Caco-2 (cell line): ENCODE measurements at regions of chr1 and their contacts with region 1.

Region 1: GRCh38 chr1:205485338-205486228 is 18.9 kb upstream of the CDK18 start:
- DNase-seq: peak; percentile 89 to 91
- H3K4me3 ChIP-seq: no peak overlapping the region
- H3K4me3 Mint-ChIP-seq: no peak overlapping the region
- H3K27ac Mint-ChIP-seq: no peak overlapping the region
- H3K4me1 ChIP-seq: 0 out of 2 replicates have a peak, but pooled peaks cover 3% of the 10 kb centered on the region
- H3K4me1 Mint-ChIP-seq: no peaks in the 10 kb centered on the region
- H3K27me3 ChIP-seq: no peaks in the 10 kb centered on the region; the same call in 1 of the 2 replicates
- H3K27me3 Mint-ChIP-seq: peaks cover 21% of the 10 kb centered on the region
- CTCF ChIP-seq: peak; percentile 94 to 95

Region 2: DNA sequence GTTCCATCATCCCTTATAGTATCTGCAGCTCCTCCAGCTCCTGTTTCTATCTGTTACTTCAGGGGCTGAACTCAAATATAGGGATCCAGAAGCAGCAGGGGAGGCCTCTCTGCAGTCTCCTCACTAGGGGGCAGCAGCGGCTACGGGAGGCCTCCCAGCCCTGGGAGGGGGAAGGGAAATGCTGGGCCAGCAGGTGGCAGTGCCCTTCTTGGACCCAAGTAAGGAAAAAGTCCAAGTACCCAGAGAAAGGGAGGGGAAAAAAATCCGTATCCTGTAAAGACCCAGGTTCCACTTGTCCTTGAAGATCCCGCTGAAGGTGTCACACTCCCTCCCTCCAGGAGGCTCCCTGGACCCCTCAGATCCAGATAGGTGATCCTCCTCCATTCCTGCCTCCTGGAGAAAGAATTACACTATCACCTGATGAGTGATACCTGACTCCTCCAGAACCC is 149.9 kb before region 1 on chr1:
- CTCF ChIA-PET with region 1: interaction called, 14 read pairs
- POLR2A ChIA-PET with region 1: no interaction called
- intact Hi-C with region 1: loop called (anchors 1 kb)
- DNase-seq: peak; percentile 79 to 87
- H3K4me3 ChIP-seq: no peak overlapping the region
- H3K4me3 Mint-ChIP-seq: no peak overlapping the region
- H3K27ac Mint-ChIP-seq: no peak overlapping the region
- H3K4me1 ChIP-seq: no peaks in the 10 kb centered on the region
- H3K4me1 Mint-ChIP-seq: no peaks in the 10 kb centered on the region
- H3K27me3 ChIP-seq: no peaks in the 10 kb centered on the region
- H3K27me3 Mint-ChIP-seq: no peaks in the 10 kb centered on the region
- CTCF ChIP-seq: peak; percentile 90 to 99

Region 3: GRCh38 chr1:205365945-205366463 is 119.6 kb before region 1 on chr1:
- CTCF ChIA-PET with region 1: no interaction called
- POLR2A ChIA-PET with region 1: no interaction called
- intact Hi-C with region 1: no loop called
- DNase-seq: no peak
- H3K4me3 ChIP-seq: no peak overlapping the region
- H3K4me3 Mint-ChIP-seq: no peak overlapping the region
- H3K27ac Mint-ChIP-seq: no peak overlapping the region
- H3K4me1 ChIP-seq: no peaks in the 10 kb centered on the region
- H3K4me1 Mint-ChIP-seq: no peaks in the 10 kb centered on the region
- H3K27me3 ChIP-seq: no peaks in the 10 kb centered on the region
- H3K27me3 Mint-ChIP-seq: peaks cover 10% of the 10 kb centered on the region
- CTCF ChIP-seq: no peak

Region 4: DNA sequence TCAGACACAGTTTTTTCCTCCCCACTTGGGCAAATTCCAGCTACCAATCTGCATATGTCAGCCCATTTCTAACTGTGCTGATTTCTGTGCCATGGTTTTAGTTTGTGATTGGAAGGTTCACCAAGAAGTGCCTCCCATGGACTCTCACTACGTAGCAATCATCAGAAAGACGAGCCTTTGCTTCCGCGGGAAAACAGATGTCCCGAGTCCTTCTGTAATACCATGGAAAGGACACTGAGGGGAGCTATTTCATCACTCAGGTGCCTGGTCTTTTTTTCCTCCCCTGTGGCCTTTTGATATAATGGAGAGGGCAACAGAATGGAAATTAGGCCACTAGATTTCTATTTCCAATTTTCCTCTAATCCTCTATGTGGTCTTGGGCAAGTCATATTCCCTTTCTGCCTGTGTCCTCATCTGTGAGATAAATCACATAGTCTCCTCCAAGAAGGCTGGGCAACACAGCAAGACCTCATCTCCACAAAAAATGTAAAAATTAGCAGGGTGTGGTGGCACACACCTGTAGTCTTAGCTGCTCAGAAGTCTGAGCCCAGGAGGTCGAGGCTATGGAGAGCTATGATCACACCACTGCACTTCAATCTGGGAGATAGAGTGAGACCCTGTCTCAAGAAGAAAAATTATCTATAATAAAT is 88.5 kb before region 1 on chr1:
- CTCF ChIA-PET with region 1: interaction called, 33 read pairs
- POLR2A ChIA-PET with region 1: no interaction called
- intact Hi-C with region 1: loop called (anchors 1 kb)
- DNase-seq: peak; percentile 44 to 51
- H3K4me3 ChIP-seq: no peak overlapping the region
- H3K4me3 Mint-ChIP-seq: no peak overlapping the region
- H3K27ac Mint-ChIP-seq: no peak overlapping the region
- H3K4me1 ChIP-seq: no peaks in the 10 kb centered on the region
- H3K4me1 Mint-ChIP-seq: no peaks in the 10 kb centered on the region
- H3K27me3 ChIP-seq: no peaks in the 10 kb centered on the region
- H3K27me3 Mint-ChIP-seq: peaks cover 21% of the 10 kb centered on the region
- CTCF ChIP-seq: peak; percentile 70 to 83

Region 5: DNA sequence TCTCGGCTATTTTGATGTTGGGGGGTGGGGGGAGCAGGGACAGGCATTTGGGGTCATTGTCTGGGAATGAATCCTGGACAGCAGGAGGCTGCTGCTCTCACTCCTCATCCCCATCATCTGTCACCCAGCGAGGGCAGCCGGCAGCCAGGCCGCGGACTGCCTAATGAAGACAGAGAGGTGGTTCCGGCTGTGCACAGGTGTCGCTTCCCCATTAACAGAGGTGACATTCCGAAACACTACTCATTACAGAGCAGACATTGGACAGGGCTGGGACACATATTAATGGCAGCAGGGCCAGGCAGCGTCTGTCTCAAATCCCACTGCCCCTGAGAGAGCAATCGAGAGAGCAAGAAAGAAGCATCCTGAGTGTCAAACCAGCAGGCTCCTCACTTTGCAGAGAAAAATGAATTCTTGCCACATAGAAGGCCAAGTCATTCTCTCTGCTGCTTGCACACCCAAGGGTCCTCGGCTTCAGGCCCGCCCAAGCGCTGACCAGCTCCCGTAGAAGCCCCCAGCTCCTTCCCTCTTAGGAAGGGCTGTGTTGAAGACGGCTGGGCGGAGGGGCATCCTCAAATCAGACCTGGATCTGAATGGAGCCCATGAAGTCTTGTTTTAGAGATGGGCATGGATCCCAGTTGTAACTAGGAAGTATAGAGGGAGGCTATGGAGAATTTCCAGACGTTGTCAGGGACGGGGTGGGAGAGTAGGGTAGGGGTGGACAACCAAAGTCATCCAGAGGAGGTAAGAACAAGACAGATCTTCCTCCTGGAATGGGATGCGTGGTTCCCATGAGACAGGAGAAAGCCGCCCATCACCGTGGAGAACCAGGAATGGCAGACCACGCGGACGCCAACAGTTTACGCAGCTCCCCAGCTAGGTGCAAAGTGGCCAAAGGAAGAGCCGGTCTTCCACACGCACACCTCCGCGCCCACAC is 55.6 kb before region 1 on chr1:
- CTCF ChIA-PET with region 1: interaction called, 8 read pairs
- POLR2A ChIA-PET with region 1: interaction called, 11 read pairs
- intact Hi-C with region 1: no loop called
- DNase-seq: no peak
- H3K4me3 ChIP-seq: no peak overlapping the region
- H3K4me3 Mint-ChIP-seq: peak overlapping the region; percentile 53
- H3K27ac Mint-ChIP-seq: no peak overlapping the region
- H3K4me1 ChIP-seq: no peaks in the 10 kb centered on the region
- H3K4me1 Mint-ChIP-seq: no peaks in the 10 kb centered on the region
- H3K27me3 ChIP-seq: no peaks in the 10 kb centered on the region; the same call in 1 of the 2 replicates
- H3K27me3 Mint-ChIP-seq: peaks cover 17% of the 10 kb centered on the region
- CTCF ChIP-seq: no peak

Region 6: GRCh38 chr1:205458777-205459566 is 26.6 kb before region 1 on chr1:
- CTCF ChIA-PET with region 1: interaction called, 15 read pairs
- POLR2A ChIA-PET with region 1: no interaction called
- intact Hi-C with region 1: no loop called
- DNase-seq: peak; percentile 60 to 72
- H3K4me3 ChIP-seq: no peak overlapping the region
- H3K4me3 Mint-ChIP-seq: no peak overlapping the region
- H3K27ac Mint-ChIP-seq: no peak overlapping the region
- H3K4me1 ChIP-seq: no peaks in the 10 kb centered on the region; the same call in 1 of the 2 replicates
- H3K4me1 Mint-ChIP-seq: no peaks in the 10 kb centered on the region
- H3K27me3 ChIP-seq: peaks cover 1% of the 10 kb centered on the region
- H3K27me3 Mint-ChIP-seq: peaks cover 24% of the 10 kb centered on the region
- CTCF ChIP-seq: no peak

Region 7: DNA sequence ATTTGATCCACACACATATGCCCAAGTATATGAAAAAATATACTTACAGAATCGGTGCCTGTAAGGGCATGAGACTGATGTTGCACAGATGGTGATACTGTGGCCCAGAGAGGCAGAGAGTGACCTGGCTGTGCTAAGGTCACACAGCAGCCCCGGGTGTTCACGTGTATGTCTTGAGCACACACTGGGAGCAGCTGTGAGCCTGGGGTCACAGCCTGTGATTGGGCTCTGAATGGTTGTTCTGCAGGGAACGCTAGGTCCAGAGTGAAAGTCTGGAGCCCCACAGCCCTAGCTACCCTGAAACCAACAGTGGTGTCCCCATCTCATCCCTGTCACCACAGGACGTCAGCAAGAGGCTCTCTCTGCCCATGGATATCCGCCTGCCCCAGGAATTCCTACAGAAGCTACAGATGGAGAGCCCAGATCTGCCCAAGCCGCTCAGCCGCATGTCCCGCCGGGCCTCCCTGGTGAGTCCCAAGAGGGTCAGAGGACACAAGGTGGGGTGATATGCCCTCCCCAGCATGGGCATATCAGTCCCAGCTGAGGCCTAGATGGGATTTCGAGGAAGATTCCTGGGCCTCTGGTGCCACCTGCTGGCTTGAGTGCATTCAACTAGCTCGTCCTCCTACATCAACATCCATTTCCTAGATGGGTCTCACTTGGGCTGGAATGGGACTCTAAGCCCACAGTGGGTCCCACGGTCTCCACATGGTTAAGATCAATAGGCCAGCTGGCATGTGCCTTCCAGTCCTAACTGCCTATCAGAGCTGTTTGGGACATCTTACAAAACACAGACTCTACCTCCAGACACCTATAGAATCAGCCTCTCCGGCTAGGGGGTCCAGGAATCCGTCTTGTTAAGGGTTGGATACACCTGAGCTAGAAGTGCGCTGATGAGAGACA is 38.6 kb after region 1 on chr1:
- CTCF ChIA-PET with region 1: interaction called, 203 read pairs
- POLR2A ChIA-PET with region 1: no interaction called
- intact Hi-C with region 1: loop called (anchors 1 kb)
- DNase-seq: peak; percentile 76 to 81
- H3K4me3 ChIP-seq: no peak overlapping the region
- H3K4me3 Mint-ChIP-seq: no peak overlapping the region
- H3K27ac Mint-ChIP-seq: no peak overlapping the region
- H3K4me1 ChIP-seq: no peaks in the 10 kb centered on the region
- H3K4me1 Mint-ChIP-seq: no peaks in the 10 kb centered on the region
- H3K27me3 ChIP-seq: no peaks in the 10 kb centered on the region
- H3K27me3 Mint-ChIP-seq: peaks cover 4% of the 10 kb centered on the region
- CTCF ChIP-seq: peak; percentile 80 to 92

Region 8: GRCh38 chr1:205543411-205544301 is 58.1 kb after region 1 on chr1:
- CTCF ChIA-PET with region 1: no interaction called
- POLR2A ChIA-PET with region 1: no interaction called
- intact Hi-C with region 1: no loop called
- DNase-seq: peak in 1 of 2 experiments; percentile 43
- H3K4me3 ChIP-seq: peak overlapping the region; percentile 10; the same call in 1 of the 2 replicates
- H3K4me3 Mint-ChIP-seq: peak overlapping the region; percentile 67
- H3K27ac Mint-ChIP-seq: no peak overlapping the region
- H3K4me1 ChIP-seq: peaks cover 8% of the 10 kb centered on the region; the same call in 1 of the 2 replicates
- H3K4me1 Mint-ChIP-seq: peaks cover 4% of the 10 kb centered on the region
- H3K27me3 ChIP-seq: no peaks in the 10 kb centered on the region; the same call in 1 of the 2 replicates
- H3K27me3 Mint-ChIP-seq: peaks cover 9% of the 10 kb centered on the region
- CTCF ChIP-seq: no peak